Head of caudate nucleus (tissue), 42 donors: ENCODE measurements at regions of chr5 and their contacts with region 1.

Region 1: GRCh38 chr5:43556857-43557542 is at the start of gene PAIP1:
- DNase-seq: peak; percentile 27 to 90 (median 80)

Region 2: GRCh38 chr5:42784132-42784531 is 772.9 kb before region 1 on chr5:
- intact Hi-C with region 1: no loop called
- DNase-seq: no peak

Region 3: GRCh38 chr5:43066799-43067741 is 489.9 kb before region 1 on chr5:
- intact Hi-C with region 1: no loop called
- DNase-seq: peak; percentile 75 to 96 (median 90)

Region 4: DNA sequence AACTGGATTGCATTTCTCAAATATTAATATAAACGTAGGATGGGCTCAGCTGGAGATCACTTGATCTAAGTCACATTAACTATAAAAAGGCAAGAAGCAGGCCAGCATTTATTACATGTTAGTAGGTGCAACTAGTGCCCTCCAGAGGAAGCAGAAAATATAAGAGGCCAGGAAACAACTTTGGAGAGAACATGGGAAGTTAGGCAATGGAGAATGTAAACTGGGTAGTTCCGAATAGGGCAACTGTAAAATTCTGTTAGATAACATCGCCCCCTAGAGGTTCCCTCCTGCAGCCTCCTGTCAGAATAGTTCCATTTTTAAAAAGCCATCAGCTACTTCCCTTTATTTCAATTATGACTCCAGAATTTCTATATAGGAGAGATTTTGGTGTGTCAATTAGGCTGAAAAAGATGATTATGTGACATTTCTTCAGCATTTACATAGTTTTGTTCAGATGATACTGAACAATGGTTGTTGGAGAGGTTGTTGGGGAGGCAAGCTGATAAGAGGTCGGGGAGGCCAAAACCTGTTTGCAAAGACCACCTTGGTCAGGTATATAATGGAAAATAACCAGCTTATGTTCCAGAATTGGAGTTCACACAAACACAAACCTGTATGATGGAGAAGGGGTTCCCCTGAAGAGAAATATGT is 167.2 kb before region 1 on chr5:
- intact Hi-C with region 1: no loop called
- DNase-seq: peak in 39 of 42 donors; percentile 4 to 85 (median 62)

Region 5: GRCh38 chr5:43484106-43484849 is 72.7 kb before region 1 on chr5:
- intact Hi-C with region 1: loop called (anchors 5 kb)
- DNase-seq: peak; percentile 67 to 93 (median 84)

Region 6: GRCh38 chr5:43602461-43603343 is 45.7 kb after region 1 on chr5 and contains the start of gene NNT:
- intact Hi-C with region 1: loop called (anchors 5 kb)
- DNase-seq: peak; percentile 45 to 95 (median 88)